ENCODE measurements at regions of chr4 and their contacts with region 1.

Region 1: GRCh38 chr4:60096676-60097075 is 1103.5 kb upstream of the ADGRL3 start:
- DNase-seq: no peak

Region 2: DNA sequence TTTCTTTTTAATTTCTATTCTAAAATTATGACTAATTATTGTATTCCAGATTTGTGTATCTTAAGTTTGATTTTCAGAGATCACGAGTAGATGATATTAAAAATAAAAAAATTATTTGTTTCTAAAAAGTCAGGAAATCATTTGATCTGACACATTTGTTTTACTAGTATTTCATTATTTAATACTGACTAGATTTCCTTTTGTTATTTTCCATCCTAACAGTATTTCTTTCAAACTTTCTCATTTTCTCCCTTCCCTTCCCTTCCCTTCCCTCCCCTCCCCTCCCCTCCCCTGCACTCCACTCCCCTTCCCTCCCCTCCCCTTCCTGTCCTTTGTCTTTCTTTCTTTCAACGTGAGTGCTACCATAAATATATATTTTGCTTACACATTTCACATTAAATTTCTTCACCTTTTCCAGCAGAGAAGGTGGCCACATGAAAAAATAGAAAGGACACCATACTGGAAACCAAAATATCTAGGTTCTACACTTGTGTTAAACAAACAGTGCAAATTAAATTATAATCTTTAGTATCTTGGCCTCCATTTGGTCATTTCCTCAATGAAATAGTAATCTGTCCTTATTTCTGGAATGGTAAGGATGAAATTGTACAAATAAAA is 1573.8 kb before region 1 on chr4:
- intact Hi-C with region 1: loop called in 1 of 2 experiments (anchors 10 kb)
- DNase-seq: no peak

Region 3: GRCh38 chr4:60201057-60201673 is 104.5 kb after region 1 on chr4:
- intact Hi-C with region 1: no loop called
- DNase-seq: no peak

Measured in posterior vena cava (tissue), 2 donors.